ENCODE measurements at regions of chr14 and their contacts with region 1.

Region 1: GRCh38 chr14:73049428-73049827 is 8.9 kb upstream of the RBM25 start:
- DNase-seq: no peak
- CTCF ChIP-seq: no peak

Region 2: DNA sequence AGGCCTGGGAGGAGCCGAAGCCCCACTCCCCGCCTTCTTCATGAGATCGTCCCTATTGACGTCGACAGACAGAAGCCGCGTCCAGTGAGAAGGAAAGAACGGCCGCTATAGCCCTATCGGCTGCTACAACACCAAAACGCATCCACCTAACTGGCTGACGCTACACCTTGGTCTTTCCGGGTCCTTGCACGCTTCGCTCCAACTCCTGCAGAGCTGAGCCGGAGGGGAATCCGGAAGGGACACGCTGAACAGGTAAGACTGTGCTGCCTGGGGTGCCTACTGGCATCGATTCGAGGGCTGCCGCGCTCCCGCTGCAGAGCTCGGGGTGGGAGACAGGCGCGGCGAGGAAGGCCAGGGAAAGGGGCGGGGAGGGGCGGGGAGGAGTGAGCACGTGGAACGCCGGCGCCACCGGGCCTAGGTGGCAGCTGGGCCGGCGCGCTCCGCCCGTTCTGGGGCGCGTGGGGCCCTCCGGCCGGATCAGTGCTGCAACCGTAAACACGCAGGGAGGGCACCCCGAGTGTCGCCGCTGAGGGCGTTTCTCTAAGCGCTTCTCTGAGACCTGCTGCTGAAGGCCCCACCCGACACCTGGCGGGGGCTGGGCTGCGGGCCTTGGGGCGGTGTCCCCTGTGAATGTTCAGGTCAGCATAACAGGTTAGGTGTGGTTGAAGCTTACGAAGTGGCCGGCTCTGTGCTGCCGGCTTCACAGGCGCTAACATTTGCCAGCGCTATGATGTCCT is 123.0 kb before region 1 on chr14 and contains the start of gene DCAF4:
- in situ Hi-C with region 1: no loop called
- DNase-seq: peak; percentile 99
- CTCF ChIP-seq: no peak

Region 3: DNA sequence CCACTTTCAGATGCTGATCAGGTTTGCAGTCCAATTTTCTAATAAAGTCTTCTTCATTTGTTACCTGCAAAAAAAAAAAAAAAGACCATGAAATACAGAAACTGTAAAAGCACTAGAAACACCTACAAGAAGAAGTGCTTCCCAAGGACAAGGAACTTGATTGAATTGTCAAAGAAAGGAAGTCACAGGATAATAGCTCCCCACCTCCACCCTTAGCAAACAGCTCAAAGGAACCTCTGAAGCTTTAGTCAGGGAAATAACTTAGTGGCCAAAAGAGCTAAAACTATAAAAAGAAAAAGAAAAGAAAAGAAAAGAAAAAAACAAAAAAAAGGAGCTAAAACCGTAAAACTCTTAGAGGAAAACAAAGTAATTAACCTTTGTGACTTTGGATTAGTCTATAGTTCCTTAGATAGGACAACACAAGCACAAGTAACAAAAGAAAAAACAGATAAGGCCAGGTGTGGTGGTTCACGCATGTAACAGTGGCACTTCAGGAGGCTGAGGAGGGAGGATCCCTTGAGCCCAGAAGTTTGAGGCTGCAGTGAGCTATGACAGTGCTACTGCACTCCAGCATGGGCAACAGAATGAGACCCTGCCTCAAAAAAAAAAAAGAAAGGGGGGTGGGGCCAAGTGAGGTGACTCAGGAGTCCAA is 51.0 kb before region 1 on chr14:
- in situ Hi-C with region 1: no loop called
- DNase-seq: no peak
- CTCF ChIP-seq: no peak

Region 4: DNA sequence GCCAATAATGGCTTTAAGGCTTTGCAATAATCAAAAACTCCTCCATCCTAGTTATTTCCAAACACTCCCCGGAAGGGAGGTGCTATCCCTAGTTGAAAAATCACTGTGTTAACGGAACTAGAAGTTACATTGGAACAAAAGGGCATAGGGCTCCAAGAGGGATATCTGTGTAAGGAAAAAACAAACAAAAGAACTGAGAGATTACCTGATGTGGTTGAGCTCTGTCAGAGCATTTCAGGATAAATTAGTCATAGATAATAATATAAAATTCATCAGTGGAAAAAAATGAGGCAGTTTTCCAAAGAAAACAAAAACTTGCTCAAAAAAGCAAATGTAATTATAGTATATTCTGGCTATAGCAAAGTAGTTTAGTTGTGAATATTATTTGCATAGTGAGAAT is 160.5 kb after region 1 on chr14:
- in situ Hi-C with region 1: no loop called
- DNase-seq: no peak
- CTCF ChIP-seq: no peak

Region 5: DNA sequence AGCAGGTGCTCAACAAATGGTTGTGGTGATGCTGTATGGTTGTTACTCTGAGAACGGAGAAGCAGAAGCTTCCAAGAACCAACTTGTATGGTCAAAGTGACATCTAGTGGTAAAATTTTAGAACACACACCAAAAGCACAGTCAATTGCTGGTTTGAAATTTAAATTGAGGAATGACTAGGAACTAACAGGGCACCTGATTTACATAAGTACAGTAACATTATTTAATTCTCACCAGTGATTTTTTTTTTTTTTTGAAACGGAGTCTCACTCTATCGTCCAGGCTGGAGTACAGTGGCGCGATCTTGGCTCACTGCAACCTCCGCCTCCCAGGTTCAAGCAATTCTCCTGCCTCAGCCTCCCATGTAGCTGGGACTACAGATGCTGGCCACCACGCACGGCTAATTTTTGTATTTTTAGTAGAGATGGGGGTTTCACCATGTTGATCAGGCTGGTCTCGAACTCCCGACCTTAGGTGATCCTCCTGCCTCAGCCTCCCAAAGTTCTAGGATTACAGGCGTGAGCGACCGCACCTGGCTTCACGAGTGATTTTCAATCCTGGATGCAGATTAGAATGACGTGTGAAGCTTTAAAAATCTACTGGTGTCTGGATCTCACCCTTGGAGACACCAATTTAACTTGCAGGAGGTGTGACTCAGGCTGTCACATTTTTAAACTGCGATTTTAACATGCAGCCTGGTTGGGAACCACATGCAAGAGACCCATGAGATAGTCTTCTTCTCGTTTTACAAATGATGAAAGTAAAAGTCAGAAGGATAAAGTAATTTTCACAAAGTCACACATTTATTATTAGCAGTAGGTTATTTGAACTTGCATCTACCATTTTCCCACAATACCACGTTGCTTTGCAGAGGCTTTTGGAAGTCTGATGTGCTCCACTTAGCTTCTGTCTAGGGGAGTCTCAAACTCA is 423.0 kb after region 1 on chr14:
- in situ Hi-C with region 1: loop called (anchors 10 kb)
- DNase-seq: peak; percentile 68
- CTCF ChIP-seq: peak; percentile 62